Gastrocnemius medialis (tissue), 4 donors: ENCODE measurements at regions of chr19 and their contacts with region 1.

Region 1: GRCh38 chr19:29529646-29530539 is 4.1 kb downstream of the VSTM2B start:
- DNase-seq: no peak
- ATAC-seq: no peak
- H3K4me3 ChIP-seq: no peak overlapping the region
- H3K27ac ChIP-seq: no peak overlapping the region
- H3K4me1 ChIP-seq: peaks cover 0 to 16% of the 10 kb centered on the region in 2 donors
- H3K27me3 ChIP-seq: peaks cover 57 to 62% (median 57%) of the 10 kb centered on the region in 3 donors
- CTCF ChIP-seq: no peak
- POLR2A ChIP-seq: no peak

Region 2: GRCh38 chr19:30183807-30184490 is 654.1 kb after region 1 on chr19:
- in situ Hi-C with region 1: no loop called
- intact Hi-C with region 1: loop called (anchors 5 kb)
- DNase-seq: no peak
- ATAC-seq: no peak
- H3K4me3 ChIP-seq: no peak overlapping the region
- H3K27ac ChIP-seq: no peak overlapping the region
- H3K4me1 ChIP-seq: no peaks in the 10 kb centered on the region
- H3K27me3 ChIP-seq: peaks cover 0 to 3% (median 0%) of the 10 kb centered on the region in 3 donors
- CTCF ChIP-seq: no peak
- POLR2A ChIP-seq: no peak